B cell (primary cell): ENCODE measurements at regions of chr7 and their contacts with region 1.

Region 1: DNA sequence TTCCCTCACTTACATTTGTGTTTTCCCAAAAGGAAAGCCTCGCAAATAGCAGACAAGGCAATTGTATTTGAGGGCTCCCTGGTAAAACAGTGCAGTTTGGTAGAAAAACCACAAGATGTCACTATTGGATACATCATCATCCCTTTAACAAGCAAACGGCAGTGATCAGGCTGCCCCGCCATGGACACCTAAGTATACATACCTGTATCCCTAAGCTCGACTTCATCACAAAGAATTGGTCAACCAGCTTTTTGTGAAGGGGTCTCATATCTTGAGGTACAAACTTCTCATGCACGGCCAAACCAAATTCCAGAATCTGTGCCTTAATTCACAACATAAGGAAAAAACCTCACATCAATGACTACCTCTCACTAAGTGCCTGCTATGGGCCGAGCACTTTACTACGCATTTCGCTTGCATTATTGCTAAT is 179.5 kb upstream of the IMMP2L start:
- DNase-seq: peak; percentile 67
- ATAC-seq: peak; percentile 69
- H3K4me3 ChIP-seq: no peak overlapping the region
- H3K4me3 Mint-ChIP-seq: no peak overlapping the region
- H3K27ac ChIP-seq: no peak overlapping the region
- H3K27ac Mint-ChIP-seq: no peak overlapping the region
- H3K4me1 ChIP-seq: no peaks in the 10 kb centered on the region
- H3K4me1 Mint-ChIP-seq: no peaks in the 10 kb centered on the region
- H3K27me3 ChIP-seq: no peaks in the 10 kb centered on the region
- H3K27me3 Mint-ChIP-seq: peaks cover 5% of the 10 kb centered on the region
- CTCF ChIP-seq: peak; percentile 80

Region 2: DNA sequence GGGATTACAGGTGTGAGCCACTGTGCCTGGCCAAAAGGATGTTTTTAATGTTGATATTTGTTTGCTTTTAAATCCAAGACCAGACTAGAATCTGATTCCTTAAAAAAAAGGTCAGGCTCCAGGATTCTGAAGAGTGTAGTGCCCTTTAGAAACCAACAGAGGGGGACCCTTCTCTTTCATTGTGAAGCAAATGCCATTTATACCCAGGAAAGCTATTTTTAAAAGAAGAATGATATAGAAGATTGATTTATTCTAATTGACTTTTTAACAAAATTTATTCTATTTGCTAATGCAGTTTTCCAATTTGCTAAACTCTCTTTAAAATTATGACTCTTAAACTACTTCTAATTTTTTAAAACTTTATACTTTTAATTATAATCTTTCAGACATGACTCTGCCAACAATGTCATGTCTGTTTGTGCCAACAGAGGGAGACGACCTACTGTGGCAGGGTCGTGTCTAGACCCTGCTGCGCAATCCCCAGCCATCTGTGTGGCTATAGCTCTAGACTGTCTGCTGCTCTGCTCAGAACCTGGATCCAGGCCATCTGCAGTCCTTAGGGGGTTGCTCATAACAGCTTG is 21.5 kb after region 1 on chr7:
- CTCF ChIA-PET with region 1: interaction called, 10 read pairs
- POLR2A ChIA-PET with region 1: no interaction called
- intact Hi-C with region 1: no loop called
- DNase-seq: no peak
- ATAC-seq: no peak
- H3K4me3 ChIP-seq: no peak overlapping the region
- H3K4me3 Mint-ChIP-seq: no peak overlapping the region
- H3K27ac ChIP-seq: no peak overlapping the region
- H3K27ac Mint-ChIP-seq: no peak overlapping the region
- H3K4me1 ChIP-seq: no peaks in the 10 kb centered on the region
- H3K4me1 Mint-ChIP-seq: no peaks in the 10 kb centered on the region
- H3K27me3 ChIP-seq: no peaks in the 10 kb centered on the region
- H3K27me3 Mint-ChIP-seq: no peaks in the 10 kb centered on the region
- CTCF ChIP-seq: peak; percentile 39

Region 3: DNA sequence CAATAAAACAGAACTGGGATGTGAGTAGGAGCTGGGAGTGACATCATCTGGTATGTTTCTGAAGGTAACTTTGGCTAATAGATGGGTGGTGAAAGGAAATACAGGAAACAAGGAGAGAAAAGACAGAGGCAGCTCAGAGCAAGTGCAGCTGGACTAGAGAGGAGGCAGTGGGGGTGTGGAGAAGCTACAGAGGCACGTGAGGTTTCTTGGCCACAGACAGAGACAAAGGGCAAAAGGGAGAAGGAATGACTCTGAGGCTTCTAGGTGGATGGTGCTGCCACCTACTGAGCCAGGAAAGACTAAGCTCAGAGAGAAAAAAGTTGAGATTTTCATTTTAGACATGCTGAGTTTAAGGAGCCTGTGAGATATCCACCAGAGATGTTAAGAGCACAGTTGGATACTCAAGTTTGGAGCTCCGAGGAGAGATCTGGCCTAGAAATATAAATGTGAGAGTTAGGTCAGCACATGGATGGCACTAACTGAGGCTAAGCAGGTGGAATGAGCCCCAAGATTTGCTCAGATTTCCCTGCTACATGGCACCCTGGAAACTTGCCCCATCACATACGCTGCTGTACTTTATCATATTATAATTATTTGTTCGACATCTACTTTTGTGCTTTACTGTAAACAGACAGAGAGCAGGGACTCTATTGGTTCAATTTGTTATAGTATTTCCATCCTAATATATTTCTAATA is 113.5 kb after region 1 on chr7:
- CTCF ChIA-PET with region 1: no interaction called
- POLR2A ChIA-PET with region 1: no interaction called
- intact Hi-C with region 1: no loop called
- DNase-seq: no peak
- ATAC-seq: no peak
- H3K4me3 ChIP-seq: no peak overlapping the region
- H3K4me3 Mint-ChIP-seq: no peak overlapping the region
- H3K27ac ChIP-seq: no peak overlapping the region
- H3K27ac Mint-ChIP-seq: no peak overlapping the region
- H3K4me1 ChIP-seq: no peaks in the 10 kb centered on the region
- H3K4me1 Mint-ChIP-seq: no peaks in the 10 kb centered on the region
- H3K27me3 ChIP-seq: no peaks in the 10 kb centered on the region
- H3K27me3 Mint-ChIP-seq: peaks cover 4% of the 10 kb centered on the region
- CTCF ChIP-seq: no peak

Region 4: DNA sequence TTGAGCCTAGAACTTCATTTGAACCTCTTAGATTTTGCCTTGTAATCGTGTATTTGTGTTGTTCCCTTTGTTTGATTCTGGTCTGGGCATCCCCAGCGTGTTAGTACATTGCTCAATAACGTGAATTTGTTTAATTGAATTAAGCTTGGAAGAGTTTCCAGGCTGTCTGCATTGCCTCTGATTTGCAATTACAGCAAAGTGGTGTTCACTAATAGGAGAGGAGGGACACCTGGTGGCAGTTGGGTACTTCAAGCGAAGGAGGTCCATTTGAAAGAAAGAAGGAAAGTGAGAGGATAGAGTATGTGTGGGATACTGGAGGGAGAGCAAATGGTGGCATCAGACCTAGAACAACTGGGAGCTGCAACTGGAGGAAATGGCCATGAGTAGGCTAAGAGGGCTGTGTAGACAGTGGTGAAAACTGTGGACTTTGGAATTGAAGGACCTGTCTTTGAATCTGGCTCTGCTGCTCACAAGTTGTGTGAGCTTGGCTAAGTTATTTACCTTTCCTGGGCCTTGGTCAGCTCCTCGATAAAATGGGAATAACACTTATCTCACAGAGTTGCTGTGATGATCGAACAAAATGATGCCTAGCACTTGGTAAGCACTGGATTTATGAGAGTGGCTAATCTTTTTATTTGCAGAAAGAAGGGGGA is 754.1 kb after region 1 on chr7:
- CTCF ChIA-PET with region 1: interaction called, 18 read pairs
- POLR2A ChIA-PET with region 1: no interaction called
- intact Hi-C with region 1: loop called (anchors 1 kb)
- DNase-seq: peak; percentile 35
- ATAC-seq: no peak
- H3K4me3 ChIP-seq: no peak overlapping the region
- H3K4me3 Mint-ChIP-seq: no peak overlapping the region
- H3K27ac ChIP-seq: no peak overlapping the region
- H3K27ac Mint-ChIP-seq: no peak overlapping the region
- H3K4me1 ChIP-seq: no peaks in the 10 kb centered on the region
- H3K4me1 Mint-ChIP-seq: no peaks in the 10 kb centered on the region
- H3K27me3 ChIP-seq: no peaks in the 10 kb centered on the region
- H3K27me3 Mint-ChIP-seq: peaks cover 11% of the 10 kb centered on the region
- CTCF ChIP-seq: peak; percentile 48

Region 5: GRCh38 chr7:113421696-113422330 is 1680.0 kb after region 1 on chr7:
- CTCF ChIA-PET with region 1: interaction called, 11 read pairs
- POLR2A ChIA-PET with region 1: no interaction called
- intact Hi-C with region 1: loop called (anchors 1 kb)
- DNase-seq: peak; percentile 80
- ATAC-seq: peak; percentile 95
- H3K4me3 ChIP-seq: no peak overlapping the region
- H3K4me3 Mint-ChIP-seq: no peak overlapping the region
- H3K27ac ChIP-seq: no peak overlapping the region
- H3K27ac Mint-ChIP-seq: no peak overlapping the region
- H3K4me1 ChIP-seq: peaks cover 0 to 3% of the 10 kb centered on the region in 2 donors
- H3K4me1 Mint-ChIP-seq: peaks cover 2% of the 10 kb centered on the region
- H3K27me3 ChIP-seq: no peaks in the 10 kb centered on the region
- H3K27me3 Mint-ChIP-seq: peaks cover 2% of the 10 kb centered on the region
- CTCF ChIP-seq: peak; percentile 92